Posterior cingulate gyrus (tissue), 11 donors: ENCODE measurements at regions of chr6 and their contacts with region 1.

Region 1: DNA sequence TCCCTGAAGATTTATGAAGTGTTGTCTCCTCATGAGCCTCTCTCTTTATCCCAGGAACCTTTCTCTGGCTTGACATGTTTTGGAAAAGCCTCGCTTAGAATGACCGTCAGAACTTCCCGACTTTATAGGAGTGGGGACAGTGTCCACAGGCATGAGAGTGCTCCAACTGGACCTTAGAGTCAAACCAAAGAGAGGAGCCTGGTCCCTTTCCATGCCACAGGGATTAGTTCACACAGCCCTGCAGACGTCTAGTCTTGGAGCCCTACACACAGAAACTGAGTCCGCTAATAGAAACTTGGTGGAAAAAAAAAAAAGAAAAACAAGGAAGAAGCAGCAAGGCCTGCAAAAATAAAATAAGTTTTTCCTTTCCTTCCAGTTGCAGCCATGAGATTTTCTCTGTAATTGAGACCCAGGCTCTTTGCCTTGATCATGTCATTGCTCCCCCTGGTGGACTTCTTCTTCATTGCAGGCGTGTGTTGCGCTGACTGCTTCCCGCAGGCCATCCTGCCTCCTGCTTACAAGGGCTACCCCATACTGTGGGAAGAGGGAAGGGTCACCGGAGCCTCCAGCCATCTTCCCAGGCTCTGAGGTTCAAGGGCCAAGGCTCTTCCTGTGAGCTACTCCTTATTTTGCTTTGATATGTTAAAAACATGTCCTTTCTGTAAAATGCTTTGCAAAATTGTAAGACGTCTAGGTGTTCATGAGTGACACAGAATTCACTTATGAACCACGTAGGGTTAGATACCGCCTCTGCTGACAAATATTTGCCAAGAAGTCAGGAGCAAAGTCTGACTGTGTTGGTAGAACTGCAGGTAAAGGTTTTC is 201.0 kb downstream of the UST start:
- DNase-seq: peak; percentile 52 to 96 (median 89)

Region 2: GRCh38 chr6:148578245-148578732 is 369.5 kb before region 1 on chr6:
- intact Hi-C with region 1: loop called (anchors 1 kb)
- DNase-seq: peak; percentile 67 to 97 (median 82)

Region 3: DNA sequence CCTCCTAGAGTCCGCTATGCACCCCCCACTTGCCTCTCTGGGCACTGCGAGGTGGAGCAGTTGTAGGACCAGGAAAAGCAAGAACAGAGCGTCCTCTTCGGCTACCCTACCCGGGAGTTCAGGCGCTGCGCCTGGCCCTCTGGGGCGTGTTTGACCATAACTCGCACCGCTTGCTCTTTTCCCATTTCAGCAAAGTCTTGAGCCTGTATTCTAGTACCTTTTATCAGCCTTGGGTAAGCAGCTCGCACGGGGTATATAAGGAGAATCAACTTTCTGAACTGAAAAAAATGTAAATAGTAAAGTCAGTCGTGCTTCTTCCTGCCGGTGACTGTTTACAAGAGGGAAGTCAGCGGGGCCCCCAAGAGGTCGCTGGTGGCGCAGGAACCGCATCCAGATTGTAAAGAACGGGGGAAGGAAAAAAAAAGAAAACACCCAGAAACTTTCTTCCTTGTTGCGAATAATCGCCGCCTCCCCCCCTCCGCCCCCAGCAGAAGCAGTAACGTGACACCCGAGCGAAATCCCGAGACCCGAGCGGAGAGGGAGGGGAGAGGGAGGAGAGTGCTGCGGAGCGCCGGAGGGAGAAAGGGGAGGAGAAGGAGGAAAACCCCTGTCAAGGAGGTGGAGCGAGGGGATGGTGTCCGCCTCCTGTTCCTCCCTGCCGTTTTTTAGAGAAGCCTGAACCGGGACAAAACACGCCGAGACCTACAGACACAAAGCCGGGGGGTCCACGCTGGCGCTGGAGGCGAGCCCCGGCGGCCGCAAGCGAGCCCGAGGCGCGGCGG is 201.3 kb before region 1 on chr6 and contains the start of gene UST:
- intact Hi-C with region 1: loop called (anchors 5 kb)
- DNase-seq: peak; percentile 33 to 90 (median 53)